ENCODE measurements at regions of chr7 and their contacts with region 1.

Region 1: DNA sequence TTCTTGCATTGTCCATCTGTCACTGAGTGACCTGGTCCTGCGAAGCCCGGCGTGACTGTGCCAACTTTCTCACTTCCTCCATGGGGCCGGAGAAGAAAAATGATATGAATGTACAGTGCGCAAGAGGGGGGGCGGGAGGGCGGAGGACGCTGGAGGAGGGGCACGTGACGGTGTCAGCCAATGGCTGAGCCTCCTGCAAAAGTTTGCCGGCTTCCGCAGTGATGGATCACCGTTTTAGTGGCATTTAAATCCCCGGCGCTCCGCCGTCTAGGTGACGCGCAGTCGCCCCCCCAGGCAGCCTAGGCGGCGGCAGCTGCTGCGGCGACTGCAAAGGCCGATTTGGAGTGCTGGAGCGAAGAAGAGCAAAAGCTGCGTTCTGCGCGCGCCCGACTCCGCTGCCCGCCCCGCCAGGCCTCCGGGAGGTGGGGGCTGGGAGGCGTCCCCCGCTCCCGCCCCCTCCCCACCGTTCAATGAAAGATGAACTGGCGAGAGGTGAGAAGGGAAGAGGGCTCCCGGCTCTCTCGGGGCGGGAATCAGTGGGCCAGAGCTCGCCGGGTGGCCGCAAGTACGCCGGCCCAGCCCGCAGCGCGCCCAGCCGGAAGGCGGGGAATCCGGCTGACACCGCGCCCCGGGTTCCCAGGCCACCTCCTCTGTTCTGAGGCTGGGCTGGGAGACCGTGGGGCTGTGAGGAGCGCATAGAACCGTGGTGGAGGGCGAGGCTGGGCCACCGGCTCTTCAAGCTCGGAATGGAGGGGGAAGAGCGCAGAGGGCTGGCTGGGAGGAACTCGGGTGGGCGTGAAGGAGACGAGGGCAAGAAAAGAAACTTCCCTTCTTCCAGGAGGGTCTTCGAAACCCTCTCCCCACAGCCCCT is at the start of gene HOXA1:
- DNase-seq: peak; percentile 90
- H3K4me3 ChIP-seq: peak within 1 kb of the TSS; percentile 57 to 97 (median 64)
- H3K27ac ChIP-seq: peak within 1 kb of the TSS; percentile 90 to 96 (median 92)
- H3K4me1 ChIP-seq: peaks cover 19 to 46% (median 41%) of the 10 kb centered on the region in 4 donors
- H3K27me3 ChIP-seq: no peaks in the 10 kb centered on the region
- CTCF ChIP-seq: no peak
- EP300 ChIP-seq: no peak
- POLR2A ChIP-seq: peak; percentile 92
- total RNA-seq, gene HOXA1: 1.4 to 3.2 (median 1.8) TPM

Region 2: DNA sequence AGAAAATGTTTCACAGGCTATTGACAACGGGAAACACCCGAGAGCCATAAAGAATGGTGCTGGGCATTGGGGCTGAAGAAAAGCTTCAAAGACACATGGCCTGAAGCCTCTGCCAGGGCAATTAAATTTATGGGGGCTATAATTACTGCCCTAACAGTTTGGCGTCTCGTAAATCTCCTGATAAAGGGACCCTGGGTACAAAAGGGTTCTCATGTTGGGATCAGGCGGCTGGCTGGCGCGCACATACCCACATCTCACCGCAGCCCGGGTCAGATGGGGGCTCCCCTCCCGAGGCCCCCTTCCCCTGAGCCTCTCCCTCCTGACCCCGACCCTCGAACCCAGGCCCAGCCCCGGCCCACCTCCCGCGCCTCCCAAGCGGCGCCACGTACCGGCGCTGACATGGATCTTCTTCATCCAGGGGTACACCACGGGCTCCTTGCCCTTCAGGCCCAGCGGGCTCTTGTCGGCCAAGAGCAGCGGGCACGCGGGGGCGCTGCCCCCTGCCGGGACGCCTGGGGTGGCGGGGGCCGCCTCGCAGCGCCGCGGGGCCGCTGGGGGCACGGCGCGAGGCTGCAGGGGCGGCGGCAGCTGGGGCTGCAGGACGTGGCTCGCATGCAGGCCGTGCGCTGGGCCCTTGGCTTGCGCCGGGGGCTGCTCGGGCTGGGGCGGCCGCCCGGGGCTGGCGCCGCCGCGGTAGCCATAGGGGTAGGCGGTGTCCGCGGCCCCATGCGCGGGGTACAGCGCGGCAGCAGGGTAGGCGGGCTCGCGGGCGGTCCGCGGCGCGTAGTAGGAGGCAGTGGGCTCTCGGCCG is 33.8 kb after region 1 on chr7:
- in situ Hi-C with region 1: no loop called
- intact Hi-C with region 1: loop called (anchors 2 kb)
- DNase-seq: peak; percentile 70
- H3K4me3 ChIP-seq: peak overlapping the region; percentile 61 to 77 (median 67)
- H3K27ac ChIP-seq: peak overlapping the region; percentile 94 to 99 (median 96)
- H3K4me1 ChIP-seq: peaks cover 36 to 90% (median 84%) of the 10 kb centered on the region in 4 donors
- H3K27me3 ChIP-seq: no peaks in the 10 kb centered on the region
- CTCF ChIP-seq: peak in 2 of 5 experiments; percentile 7 to 25
- EP300 ChIP-seq: no peak
- POLR2A ChIP-seq: peak; percentile 76